Common myeloid progenitor, CD34-positive (primary cell): ENCODE measurements at regions of chr3 and their contacts with region 1.

Region 1: DNA sequence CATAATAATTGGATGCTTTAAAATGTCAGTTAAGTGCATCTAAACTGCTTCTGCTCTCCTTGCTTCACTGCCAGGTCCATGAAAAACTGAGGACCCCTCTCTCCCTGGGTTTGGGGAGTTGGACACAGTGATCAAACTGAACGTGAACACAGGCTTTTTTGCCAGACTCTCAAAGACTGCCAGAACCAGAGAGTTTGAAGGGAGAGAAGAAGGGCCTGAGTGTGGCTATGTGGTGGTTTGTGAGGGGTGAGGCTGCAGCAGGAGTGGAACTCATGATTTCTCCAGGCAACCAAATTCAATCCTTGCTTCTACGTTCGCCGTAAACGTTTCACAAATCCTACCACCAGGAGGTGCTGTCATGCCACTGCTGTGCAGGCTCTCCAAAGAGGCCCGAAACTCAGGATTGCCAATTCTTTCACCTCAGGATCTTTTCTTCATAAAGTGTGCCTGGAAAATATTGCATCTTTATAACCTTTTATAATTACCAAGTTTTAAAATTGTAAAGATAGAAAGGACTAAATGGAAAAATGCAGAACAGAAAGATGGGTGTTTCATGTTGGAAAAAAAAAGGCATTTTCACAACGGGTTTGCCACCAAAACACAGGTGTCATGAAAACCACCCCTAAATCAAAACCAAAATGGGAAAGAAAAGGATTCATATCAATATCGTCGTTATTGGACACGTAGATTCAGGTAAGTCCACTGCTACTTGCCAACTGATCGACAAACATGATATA is 19.7 kb downstream of the TM4SF4 start:
- DNase-seq: peak; percentile 70 to 82 (median 74)
- H3K4me3 ChIP-seq: no peak overlapping the region
- H3K27ac ChIP-seq: no peak overlapping the region
- H3K4me1 ChIP-seq: peaks cover 0 to 2% (median 0%) of the 10 kb centered on the region in 4 experiments
- H3K27me3 ChIP-seq: no peaks in the 10 kb centered on the region

Region 2: GRCh38 chr3:149512209-149512782 is 18.1 kb after region 1 on chr3:
- CTCF ChIA-PET with region 1: interaction called, 20 read pairs
- POLR2A ChIA-PET with region 1: no interaction called
- DNase-seq: peak; percentile 55 to 69 (median 68)
- H3K4me3 ChIP-seq: peak overlapping the region in 1 of 7 experiments; percentile 26
- H3K27ac ChIP-seq: no peak overlapping the region
- H3K4me1 ChIP-seq: peaks cover 0 to 29% (median 23%) of the 10 kb centered on the region in 4 experiments
- H3K27me3 ChIP-seq: no peaks in the 10 kb centered on the region

Region 3: GRCh38 chr3:149603126-149604074 is 109.2 kb after region 1 on chr3:
- CTCF ChIA-PET with region 1: no interaction called
- POLR2A ChIA-PET with region 1: no interaction called
- DNase-seq: no peak
- H3K4me3 ChIP-seq: no peak overlapping the region
- H3K27ac ChIP-seq: no peak overlapping the region
- H3K4me1 ChIP-seq: peaks cover 0 to 4% (median 0%) of the 10 kb centered on the region in 4 experiments
- H3K27me3 ChIP-seq: peaks cover 0 to 6% (median 0%) of the 10 kb centered on the region in 5 experiments